AG04449 (cell line): ENCODE measurements at regions of chr17 and their contacts with region 1.

Region 1: GRCh38 chr17:82022981-82023374 is at the start of gene LRRC45:
- DNase-seq: peak; percentile 94
- H3K4me3 ChIP-seq: peak within 1 kb of the TSS; percentile 81
- CTCF ChIP-seq: no peak

Region 2: GRCh38 chr17:81967533-81968395 is 55.2 kb before region 1 on chr17:
- CTCF ChIA-PET with region 1: interaction called, 290 read pairs
- POLR2A ChIA-PET with region 1: no interaction called
- DNase-seq: no peak
- H3K4me3 ChIP-seq: no peak overlapping the region; the same call in 1 of the 2 replicates
- CTCF ChIP-seq: no peak

Region 3: DNA sequence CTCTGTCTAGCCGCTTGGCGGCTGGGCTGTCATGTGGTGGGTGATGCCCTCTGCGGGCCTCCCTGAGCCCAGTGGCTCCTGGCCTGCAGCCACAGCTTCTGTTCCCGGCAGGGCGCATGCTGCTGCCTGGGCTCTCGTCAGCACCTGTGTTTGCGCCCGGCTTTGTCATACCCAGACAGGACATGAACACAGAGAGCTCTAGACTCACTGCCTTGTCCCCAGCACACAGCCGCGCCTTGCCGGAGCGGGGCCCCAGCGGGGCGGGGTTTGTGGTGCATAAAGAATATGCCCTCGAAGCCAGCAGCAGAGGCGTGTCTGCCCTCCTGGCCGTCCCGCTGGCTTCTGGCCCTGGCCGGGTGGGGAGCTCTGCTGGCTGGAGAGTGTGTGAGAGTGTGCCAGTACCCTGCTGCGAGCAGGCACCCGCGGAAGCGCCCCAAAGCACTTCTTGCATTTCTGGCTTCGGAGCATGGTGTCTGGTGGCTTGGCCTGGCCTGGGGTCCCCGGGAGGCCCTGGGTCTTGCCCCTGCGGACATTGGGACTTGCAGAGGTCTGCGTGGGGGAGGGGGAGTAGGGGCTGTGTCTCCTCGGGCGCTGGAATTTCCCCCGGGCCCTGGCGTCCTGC is 31.2 kb before region 1 on chr17:
- CTCF ChIA-PET with region 1: interaction called, 13 read pairs
- POLR2A ChIA-PET with region 1: no interaction called
- DNase-seq: no peak
- H3K4me3 ChIP-seq: peak overlapping the region; percentile 6
- CTCF ChIP-seq: no peak

Region 4: DNA sequence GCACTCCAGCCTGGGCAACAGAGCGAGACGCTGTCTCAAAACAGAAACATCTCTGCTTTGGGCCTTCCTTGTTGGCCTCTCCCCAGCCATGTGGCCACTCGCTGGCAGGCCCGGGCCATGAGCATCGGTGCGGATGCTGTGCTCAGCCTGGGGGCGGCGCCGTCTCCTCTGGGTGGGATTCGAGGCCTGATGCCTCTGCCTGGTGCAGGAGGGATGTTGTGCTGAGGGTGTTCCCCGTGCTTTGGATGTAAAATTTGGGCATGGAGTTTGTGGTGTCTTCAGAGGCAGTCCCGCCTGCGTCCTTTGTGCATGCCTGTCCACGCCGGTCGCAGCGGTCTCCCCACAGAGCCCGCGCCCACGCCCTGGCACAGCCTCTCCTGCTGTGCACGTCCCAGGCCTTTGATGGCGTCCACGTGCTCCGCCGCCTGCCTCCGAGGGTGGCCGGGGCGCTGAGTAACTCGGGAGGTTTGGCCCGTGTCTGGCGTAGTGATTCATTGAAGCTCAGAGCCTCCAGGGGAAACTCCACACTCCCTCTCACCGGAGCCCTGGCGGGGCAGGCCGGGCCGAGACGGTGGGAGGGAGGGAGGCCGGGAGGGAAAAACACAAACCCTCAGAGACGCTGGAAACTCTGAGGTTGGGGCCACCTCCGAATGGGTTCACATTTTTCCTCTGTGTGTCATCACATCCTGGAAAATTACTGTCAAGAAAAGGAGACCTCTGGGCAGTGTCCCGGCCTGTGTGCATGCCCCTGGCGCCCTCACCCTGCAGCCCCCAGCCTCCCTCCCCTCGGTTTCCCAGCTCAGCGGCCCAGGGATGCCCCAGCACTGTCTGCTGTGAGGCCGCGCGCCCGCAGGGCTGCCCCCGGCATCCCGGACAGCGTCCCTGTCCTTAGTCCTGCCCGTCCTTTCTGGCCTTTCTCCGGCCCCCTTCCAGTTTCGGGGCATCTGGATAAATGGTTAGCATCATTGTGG is 19.3 kb before region 1 on chr17:
- CTCF ChIA-PET with region 1: interaction called, 46 read pairs
- POLR2A ChIA-PET with region 1: interaction called, 4 read pairs
- DNase-seq: peak; percentile 63
- H3K4me3 ChIP-seq: no peak overlapping the region
- CTCF ChIP-seq: no peak

Region 5: GRCh38 chr17:82098072-82098821 is 75.3 kb after region 1 on chr17 and contains the start of gene FASN:
- CTCF ChIA-PET with region 1: no interaction called
- POLR2A ChIA-PET with region 1: no interaction called
- DNase-seq: peak; percentile 42
- H3K4me3 ChIP-seq: peak within 1 kb of the TSS; percentile 70
- CTCF ChIP-seq: peak; percentile 76

Region 6: GRCh38 chr17:82380860-82381702 is 358.1 kb after region 1 on chr17:
- CTCF ChIA-PET with region 1: no interaction called
- POLR2A ChIA-PET with region 1: no interaction called
- DNase-seq: no peak
- H3K4me3 ChIP-seq: no peak overlapping the region
- CTCF ChIP-seq: no peak